ENCODE measurements at regions of chr9 and their contacts with region 1.

Region 1: GRCh38 chr9:37027582-37028419 is 6.3 kb downstream of the PAX5 start:
- DNase-seq: peak; percentile 99
- ATAC-seq: peak; percentile 84
- H3K4me3 ChIP-seq: peak overlapping the region; percentile 5 to 95 (median 86)
- H3K4me3 Mint-ChIP-seq: peak overlapping the region; percentile 89
- H3K27ac ChIP-seq: peak overlapping the region; percentile 98 to 100
- H3K27ac Mint-ChIP-seq: peak overlapping the region; percentile 96
- H3K4me1 ChIP-seq: peaks cover 62 to 81% of the 10 kb centered on the region in 2 donors
- H3K4me1 Mint-ChIP-seq: peaks cover 78% of the 10 kb centered on the region
- H3K27me3 ChIP-seq: no peaks in the 10 kb centered on the region
- H3K27me3 Mint-ChIP-seq: no peaks in the 10 kb centered on the region
- CTCF ChIP-seq: no peak

Region 2: GRCh38 chr9:37010180-37010579 is 17.6 kb before region 1 on chr9:
- CTCF ChIA-PET with region 1: interaction called, 22 read pairs
- POLR2A ChIA-PET with region 1: interaction called, 18 read pairs
- intact Hi-C with region 1: no loop called
- DNase-seq: peak; percentile 39
- ATAC-seq: peak; percentile 19
- H3K4me3 ChIP-seq: peak overlapping the region in 3 of 5 experiments; percentile 7 to 40 (median 12)
- H3K4me3 Mint-ChIP-seq: peak overlapping the region; percentile 75
- H3K27ac ChIP-seq: peak overlapping the region; percentile 77 to 83
- H3K27ac Mint-ChIP-seq: peak overlapping the region; percentile 98
- H3K4me1 ChIP-seq: peaks cover 95 to 97% of the 10 kb centered on the region in 2 donors
- H3K4me1 Mint-ChIP-seq: peaks cover 91% of the 10 kb centered on the region
- H3K27me3 ChIP-seq: no peaks in the 10 kb centered on the region
- H3K27me3 Mint-ChIP-seq: no peaks in the 10 kb centered on the region
- CTCF ChIP-seq: no peak

Region 3: DNA sequence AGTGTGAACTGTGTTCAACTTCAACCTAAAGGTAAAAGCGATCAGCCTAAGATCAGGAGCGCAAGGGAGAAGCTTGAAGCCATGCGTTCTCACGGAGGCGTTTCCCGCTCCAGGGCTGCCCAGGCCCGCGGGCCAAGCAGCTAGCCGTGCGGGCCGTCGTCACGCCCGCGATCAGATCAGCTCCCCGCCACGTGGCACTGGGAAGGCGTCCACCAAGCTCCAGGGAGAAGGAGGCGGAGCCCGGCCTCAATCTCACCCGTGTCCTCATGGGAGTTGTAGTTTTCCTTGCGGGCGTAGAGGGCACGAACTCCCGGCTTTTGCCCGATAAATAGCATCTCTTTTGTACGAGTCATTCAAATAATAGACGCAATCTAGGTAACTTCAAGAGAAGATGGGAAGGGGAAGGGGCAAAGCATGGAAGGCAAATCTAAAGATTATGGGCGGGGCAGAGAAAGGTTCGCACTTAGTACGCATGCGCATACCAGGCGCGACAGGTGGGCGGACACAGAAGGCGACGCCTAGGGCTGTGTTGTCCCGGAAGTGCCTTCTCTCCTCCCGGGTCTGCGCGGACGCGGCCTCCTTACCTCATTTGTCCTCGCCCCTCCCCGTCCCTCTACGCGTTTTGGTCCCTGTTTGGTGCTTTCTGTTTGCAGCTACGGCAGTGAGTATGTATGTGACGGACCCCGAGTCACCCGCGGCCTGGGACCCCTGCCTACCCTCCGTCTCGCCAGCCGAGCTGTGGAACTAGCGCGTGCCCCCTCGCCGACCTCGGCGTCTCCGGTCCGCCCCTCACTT is 51.8 kb after region 1 on chr9:
- CTCF ChIA-PET with region 1: interaction called, 3 read pairs
- POLR2A ChIA-PET with region 1: interaction called, 6 read pairs
- intact Hi-C with region 1: loop called (anchors 1 kb)
- DNase-seq: peak; percentile 96
- ATAC-seq: peak; percentile 95
- H3K4me3 ChIP-seq: peak overlapping the region; percentile 84 to 99 (median 95)
- H3K4me3 Mint-ChIP-seq: peak overlapping the region; percentile 99
- H3K27ac ChIP-seq: peak overlapping the region; percentile 91 to 97
- H3K27ac Mint-ChIP-seq: peak overlapping the region; percentile 98
- H3K4me1 ChIP-seq: peaks cover 54 to 55% of the 10 kb centered on the region in 2 donors
- H3K4me1 Mint-ChIP-seq: peaks cover 74% of the 10 kb centered on the region
- H3K27me3 ChIP-seq: no peaks in the 10 kb centered on the region
- H3K27me3 Mint-ChIP-seq: no peaks in the 10 kb centered on the region
- CTCF ChIP-seq: no peak

Region 4: GRCh38 chr9:37309136-37309535 is 281.3 kb after region 1 on chr9:
- CTCF ChIA-PET with region 1: interaction called, 6 read pairs
- POLR2A ChIA-PET with region 1: interaction called, 10 read pairs
- intact Hi-C with region 1: no loop called
- DNase-seq: peak; percentile 77
- ATAC-seq: peak; percentile 82
- H3K4me3 ChIP-seq: no peak overlapping the region
- H3K4me3 Mint-ChIP-seq: peak overlapping the region; percentile 16
- H3K27ac ChIP-seq: peak overlapping the region; percentile 5 to 64
- H3K27ac Mint-ChIP-seq: peak overlapping the region; percentile 84
- H3K4me1 ChIP-seq: peaks cover 27 to 42% of the 10 kb centered on the region in 2 donors
- H3K4me1 Mint-ChIP-seq: peaks cover 35% of the 10 kb centered on the region
- H3K27me3 ChIP-seq: no peaks in the 10 kb centered on the region
- H3K27me3 Mint-ChIP-seq: no peaks in the 10 kb centered on the region
- CTCF ChIP-seq: peak; percentile 76

Region 5: GRCh38 chr9:37329576-37329975 is 301.8 kb after region 1 on chr9:
- CTCF ChIA-PET with region 1: interaction called, 28 read pairs
- POLR2A ChIA-PET with region 1: interaction called, 3 read pairs
- intact Hi-C with region 1: no loop called
- DNase-seq: peak; percentile 75
- ATAC-seq: peak; percentile 40
- H3K4me3 ChIP-seq: no peak overlapping the region
- H3K4me3 Mint-ChIP-seq: peak overlapping the region; percentile 44
- H3K27ac ChIP-seq: peak overlapping the region in 1 of 2 donors; percentile 4
- H3K27ac Mint-ChIP-seq: peak overlapping the region; percentile 90
- H3K4me1 ChIP-seq: peaks cover 25 to 84% of the 10 kb centered on the region in 2 donors
- H3K4me1 Mint-ChIP-seq: peaks cover 58% of the 10 kb centered on the region
- H3K27me3 ChIP-seq: no peaks in the 10 kb centered on the region
- H3K27me3 Mint-ChIP-seq: no peaks in the 10 kb centered on the region
- CTCF ChIP-seq: peak; percentile 82

Region 6: GRCh38 chr9:37645903-37646506 is 618.2 kb after region 1 on chr9:
- CTCF ChIA-PET with region 1: no interaction called
- POLR2A ChIA-PET with region 1: no interaction called
- intact Hi-C with region 1: no loop called
- DNase-seq: no peak
- ATAC-seq: no peak
- H3K4me3 ChIP-seq: no peak overlapping the region
- H3K4me3 Mint-ChIP-seq: no peak overlapping the region
- H3K27ac ChIP-seq: no peak overlapping the region
- H3K27ac Mint-ChIP-seq: no peak overlapping the region
- H3K4me1 ChIP-seq: peaks cover 4% of the 10 kb centered on the region in 2 donors
- H3K4me1 Mint-ChIP-seq: peaks cover 4% of the 10 kb centered on the region
- H3K27me3 ChIP-seq: peaks cover 0 to 17% (median 10%) of the 10 kb centered on the region in 4 experiments
- H3K27me3 Mint-ChIP-seq: peaks cover 46% of the 10 kb centered on the region
- CTCF ChIP-seq: no peak